Naive thymus-derived CD4-positive, alpha-beta T cell (primary cell): ENCODE measurements at regions of chr6 and their contacts with region 1.

Region 1: GRCh38 chr6:137415127-137415833 is 78.9 kb downstream of the OLIG3 start:
- DNase-seq: peak; percentile 35 to 71 (median 64)
- ATAC-seq: peak; percentile 95
- H3K4me3 ChIP-seq: peak overlapping the region; percentile 62
- H3K4me3 Mint-ChIP-seq: peak overlapping the region; percentile 77 to 90 (median 86)
- H3K27ac ChIP-seq: peak overlapping the region; percentile 37
- H3K27ac Mint-ChIP-seq: peak overlapping the region; percentile 16 to 82 (median 76)
- H3K4me1 ChIP-seq: peaks cover 0 to 10% of the 10 kb centered on the region in 2 donors
- H3K4me1 Mint-ChIP-seq: peaks cover 7 to 13% (median 12%) of the 10 kb centered on the region in 7 donors
- H3K27me3 ChIP-seq: peaks cover 0 to 4% of the 10 kb centered on the region in 2 donors
- H3K27me3 Mint-ChIP-seq: peaks cover 0 to 37% (median 0%) of the 10 kb centered on the region in 5 donors

Region 2: DNA sequence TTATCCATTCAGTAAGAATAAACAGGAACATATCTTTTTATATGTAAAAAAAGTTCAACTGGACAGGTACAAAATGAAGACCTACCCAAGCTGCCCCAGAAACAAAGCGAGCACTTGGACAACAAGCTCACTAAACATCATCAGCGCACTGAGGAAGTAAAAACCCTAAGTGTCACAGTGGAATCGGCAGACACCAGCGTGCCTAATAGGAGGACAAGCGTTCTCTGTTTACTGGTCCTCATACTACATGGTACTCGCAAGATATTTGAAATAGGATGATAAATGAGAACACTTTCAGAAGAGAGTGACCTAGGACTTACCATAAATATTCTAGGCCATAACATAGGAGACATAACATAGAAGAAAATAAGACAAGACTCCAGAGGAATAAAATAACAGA is 883.2 kb before region 1 on chr6:
- CTCF ChIA-PET with region 1: no interaction called
- POLR2A ChIA-PET with region 1: no interaction called
- intact Hi-C with region 1: no loop called
- DNase-seq: no peak
- ATAC-seq: no peak
- H3K4me3 ChIP-seq: no peak overlapping the region
- H3K4me3 Mint-ChIP-seq: no peak overlapping the region
- H3K27ac ChIP-seq: no peak overlapping the region
- H3K27ac Mint-ChIP-seq: no peak overlapping the region
- H3K4me1 ChIP-seq: no peaks in the 10 kb centered on the region
- H3K4me1 Mint-ChIP-seq: peaks cover 0 to 6% (median 2%) of the 10 kb centered on the region in 7 donors
- H3K27me3 ChIP-seq: no peaks in the 10 kb centered on the region
- H3K27me3 Mint-ChIP-seq: peaks cover 0 to 21% (median 11%) of the 10 kb centered on the region in 5 donors

Region 3: DNA sequence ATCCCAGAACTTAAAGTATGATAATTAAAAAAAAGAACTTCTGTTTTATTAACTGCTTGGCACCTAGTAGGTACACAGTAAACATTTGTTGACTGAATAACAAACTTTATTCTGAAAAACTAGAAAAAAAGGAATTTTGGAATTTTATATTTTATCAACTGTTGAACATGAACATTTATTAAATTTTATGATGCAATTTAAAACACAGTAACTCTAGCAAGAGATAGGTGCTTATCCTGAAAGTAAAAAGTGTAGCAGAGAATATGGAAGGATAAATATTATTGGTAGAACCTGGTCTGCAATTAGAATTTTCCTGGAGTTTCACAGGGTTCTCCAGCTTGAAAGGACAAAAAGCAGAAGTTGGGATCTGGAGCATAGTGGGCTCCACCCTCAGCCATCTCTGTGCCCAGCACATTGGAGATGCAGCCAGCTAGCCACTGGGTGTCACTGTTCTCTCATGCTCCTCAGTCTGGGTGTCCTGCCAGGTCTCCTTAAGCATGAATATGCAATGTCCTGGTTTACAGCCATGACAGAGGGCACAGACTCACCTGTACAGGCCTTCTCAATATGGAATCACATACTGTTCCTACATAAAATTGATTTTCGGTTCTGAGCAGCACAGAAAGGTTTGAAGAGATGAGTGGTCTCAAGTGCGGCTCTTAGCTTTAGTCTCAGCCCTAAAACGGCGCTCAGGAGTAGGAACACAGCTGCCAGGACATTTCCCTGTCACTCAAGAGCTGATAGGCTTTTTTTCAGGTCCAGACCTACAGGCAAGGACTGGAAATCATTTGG is 338.8 kb before region 1 on chr6:
- CTCF ChIA-PET with region 1: no interaction called
- POLR2A ChIA-PET with region 1: no interaction called
- intact Hi-C with region 1: loop called (anchors 1 to 5 kb)
- DNase-seq: peak; percentile 4 to 50 (median 22)
- ATAC-seq: peak; percentile 95
- H3K4me3 ChIP-seq: no peak overlapping the region
- H3K4me3 Mint-ChIP-seq: no peak overlapping the region
- H3K27ac ChIP-seq: no peak overlapping the region
- H3K27ac Mint-ChIP-seq: no peak overlapping the region
- H3K4me1 ChIP-seq: no peaks in the 10 kb centered on the region
- H3K4me1 Mint-ChIP-seq: no peaks in the 10 kb centered on the region
- H3K27me3 ChIP-seq: no peaks in the 10 kb centered on the region
- H3K27me3 Mint-ChIP-seq: peaks cover 17 to 55% (median 24%) of the 10 kb centered on the region in 5 donors

Region 4: DNA sequence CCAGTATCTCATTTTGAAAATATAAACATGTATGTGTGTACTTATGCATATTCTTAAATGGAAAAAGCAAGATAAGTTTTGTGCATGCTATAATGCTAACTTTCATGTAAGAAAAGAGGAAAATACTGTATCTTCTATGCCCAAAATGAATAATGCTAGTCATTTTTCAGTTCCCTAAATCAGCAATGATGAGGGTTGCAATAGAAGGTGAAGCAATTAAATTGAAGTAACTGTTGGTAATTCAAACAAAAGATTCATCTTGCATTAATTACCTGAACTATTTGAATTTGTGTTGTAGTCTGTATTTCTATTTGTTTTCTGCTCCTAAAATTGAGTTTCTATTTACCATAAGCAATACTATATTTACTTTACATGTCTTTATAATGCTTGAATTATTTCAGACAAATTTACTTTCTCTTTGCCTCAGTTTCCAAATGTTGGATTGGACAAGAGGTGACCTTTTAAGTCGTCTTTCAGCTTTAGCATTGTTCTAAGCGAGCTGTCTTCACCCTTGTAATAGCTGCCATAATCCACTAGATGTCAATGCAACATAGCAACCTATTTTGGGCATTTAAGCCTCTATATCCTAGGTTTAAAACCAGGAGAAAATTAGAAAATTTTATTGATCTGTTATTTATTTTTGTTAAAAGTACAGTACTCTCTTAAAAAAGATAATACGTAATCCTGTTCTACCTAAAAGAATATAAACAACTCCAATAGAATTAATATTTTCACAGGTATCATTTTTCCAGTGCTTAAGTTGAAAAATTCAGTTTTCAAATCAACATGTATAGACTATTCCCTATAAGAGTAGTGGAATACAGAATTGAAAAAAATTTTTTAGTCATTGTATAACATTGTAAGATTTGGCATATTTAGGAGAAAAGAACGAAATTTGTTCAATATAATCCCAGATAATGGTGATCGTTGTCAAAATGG is 143.8 kb before region 1 on chr6:
- CTCF ChIA-PET with region 1: no interaction called
- POLR2A ChIA-PET with region 1: no interaction called
- intact Hi-C with region 1: loop called (anchors 1 kb)
- DNase-seq: peak in 5 of 9 donors; percentile 8 to 41 (median 27)
- ATAC-seq: peak; percentile 76
- H3K4me3 ChIP-seq: no peak overlapping the region
- H3K4me3 Mint-ChIP-seq: no peak overlapping the region
- H3K27ac ChIP-seq: no peak overlapping the region
- H3K27ac Mint-ChIP-seq: no peak overlapping the region
- H3K4me1 ChIP-seq: peaks cover 0 to 16% of the 10 kb centered on the region in 2 donors
- H3K4me1 Mint-ChIP-seq: peaks cover 0 to 7% (median 0%) of the 10 kb centered on the region in 7 donors
- H3K27me3 ChIP-seq: no peaks in the 10 kb centered on the region
- H3K27me3 Mint-ChIP-seq: peaks cover 5 to 38% (median 6%) of the 10 kb centered on the region in 5 donors

Region 5: GRCh38 chr6:137341681-137342195 is 73.5 kb before region 1 on chr6:
- CTCF ChIA-PET with region 1: interaction called, 109 read pairs
- POLR2A ChIA-PET with region 1: interaction called, 26 read pairs
- intact Hi-C with region 1: loop called (anchors 1 kb)
- DNase-seq: peak in 8 of 9 donors; percentile 16 to 62 (median 48)
- ATAC-seq: peak; percentile 80
- H3K4me3 ChIP-seq: peak overlapping the region; percentile 24
- H3K4me3 Mint-ChIP-seq: peak overlapping the region in 9 of 10 donors; percentile 52 to 87 (median 77)
- H3K27ac ChIP-seq: no peak overlapping the region
- H3K27ac Mint-ChIP-seq: peak overlapping the region in 1 of 9 donors; percentile 76
- H3K4me1 ChIP-seq: peaks cover 5 to 10% of the 10 kb centered on the region in 2 donors
- H3K4me1 Mint-ChIP-seq: peaks cover 6 to 19% (median 17%) of the 10 kb centered on the region in 7 donors
- H3K27me3 ChIP-seq: no peaks in the 10 kb centered on the region
- H3K27me3 Mint-ChIP-seq: peaks cover 0 to 55% (median 0%) of the 10 kb centered on the region in 5 donors

Region 6: GRCh38 chr6:137363805-137364138 is 51.5 kb before region 1 on chr6:
- CTCF ChIA-PET with region 1: interaction called, 6 read pairs
- POLR2A ChIA-PET with region 1: interaction called, 4 read pairs
- intact Hi-C with region 1: loop called in 1 of 2 experiments (anchors 1 kb)
- DNase-seq: peak in 7 of 9 donors; percentile 43 to 70 (median 57)
- ATAC-seq: peak; percentile 73
- H3K4me3 ChIP-seq: no peak overlapping the region
- H3K4me3 Mint-ChIP-seq: peak overlapping the region in 8 of 10 donors; percentile 0 to 75 (median 46)
- H3K27ac ChIP-seq: no peak overlapping the region
- H3K27ac Mint-ChIP-seq: peak overlapping the region in 6 of 9 donors; percentile 3 to 80 (median 64)
- H3K4me1 ChIP-seq: peaks cover 20 to 24% of the 10 kb centered on the region in 2 donors
- H3K4me1 Mint-ChIP-seq: peaks cover 18 to 26% (median 22%) of the 10 kb centered on the region in 7 donors
- H3K27me3 ChIP-seq: no peaks in the 10 kb centered on the region
- H3K27me3 Mint-ChIP-seq: peaks cover 0 to 17% (median 0%) of the 10 kb centered on the region in 5 donors

Region 7: GRCh38 chr6:137399881-137400443 is 15.3 kb before region 1 on chr6:
- CTCF ChIA-PET with region 1: no interaction called
- POLR2A ChIA-PET with region 1: interaction called, 4 read pairs
- intact Hi-C with region 1: loop called in 1 of 2 experiments (anchors 1 kb)
- DNase-seq: no peak
- ATAC-seq: no peak
- H3K4me3 ChIP-seq: no peak overlapping the region
- H3K4me3 Mint-ChIP-seq: no peak overlapping the region
- H3K27ac ChIP-seq: no peak overlapping the region
- H3K27ac Mint-ChIP-seq: no peak overlapping the region
- H3K4me1 ChIP-seq: no peaks in the 10 kb centered on the region
- H3K4me1 Mint-ChIP-seq: peaks cover 0 to 9% (median 4%) of the 10 kb centered on the region in 7 donors
- H3K27me3 ChIP-seq: no peaks in the 10 kb centered on the region
- H3K27me3 Mint-ChIP-seq: peaks cover 0 to 7% (median 0%) of the 10 kb centered on the region in 5 donors

Region 8: DNA sequence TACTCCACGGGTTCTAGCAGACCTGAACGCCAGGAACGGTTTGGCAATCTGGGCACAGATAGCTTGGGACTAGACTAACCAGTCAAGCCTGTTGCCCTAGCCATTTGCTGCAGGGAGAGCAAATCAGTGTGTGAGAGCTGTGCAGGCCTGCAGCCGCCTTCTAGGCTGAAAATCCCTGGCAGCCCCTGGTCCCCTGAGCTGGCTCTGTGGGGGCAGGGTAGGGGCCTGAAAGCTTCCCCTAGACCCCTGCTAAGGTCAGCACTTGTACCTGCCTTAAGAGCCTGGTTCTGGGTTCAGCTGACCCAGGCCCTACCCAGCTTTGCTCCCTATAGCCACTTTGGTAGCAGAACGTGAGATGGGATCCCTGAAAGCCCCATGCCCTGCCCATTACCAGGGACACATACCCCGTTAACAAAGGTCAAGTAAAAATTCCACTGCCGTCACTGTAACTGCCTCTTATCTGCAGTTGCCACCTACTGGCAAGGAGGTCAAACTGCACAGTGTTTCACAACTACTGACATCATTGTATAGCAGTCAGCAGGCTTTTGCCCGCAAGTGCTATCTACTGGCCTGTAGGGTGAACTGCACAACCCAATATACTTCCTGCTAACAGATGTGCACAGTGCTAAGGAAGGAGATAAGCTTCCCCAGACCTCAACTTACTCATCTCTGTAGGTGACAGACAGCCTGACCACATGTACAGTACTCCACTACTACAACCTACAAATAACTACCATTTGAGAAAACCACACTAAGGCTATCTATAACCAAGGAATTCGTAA is 174.0 kb after region 1 on chr6:
- CTCF ChIA-PET with region 1: interaction called, 10 read pairs
- POLR2A ChIA-PET with region 1: no interaction called
- intact Hi-C with region 1: loop called in 1 of 2 experiments (anchors 1 kb)
- DNase-seq: peak in 7 of 9 donors; percentile 33 to 73 (median 60)
- ATAC-seq: peak; percentile 99
- H3K4me3 ChIP-seq: no peak overlapping the region
- H3K4me3 Mint-ChIP-seq: peak overlapping the region in 6 of 10 donors; percentile 5 to 52 (median 19)
- H3K27ac ChIP-seq: no peak overlapping the region
- H3K27ac Mint-ChIP-seq: peak overlapping the region in 2 of 9 donors; percentile 13 to 39
- H3K4me1 ChIP-seq: peaks cover 0 to 6% of the 10 kb centered on the region in 2 donors
- H3K4me1 Mint-ChIP-seq: peaks cover 5 to 19% (median 9%) of the 10 kb centered on the region in 7 donors
- H3K27me3 ChIP-seq: no peaks in the 10 kb centered on the region
- H3K27me3 Mint-ChIP-seq: peaks cover 4 to 59% (median 5%) of the 10 kb centered on the region in 5 donors